ENCODE measurements at regions of chr16 and their contacts with region 1.

Region 1: DNA sequence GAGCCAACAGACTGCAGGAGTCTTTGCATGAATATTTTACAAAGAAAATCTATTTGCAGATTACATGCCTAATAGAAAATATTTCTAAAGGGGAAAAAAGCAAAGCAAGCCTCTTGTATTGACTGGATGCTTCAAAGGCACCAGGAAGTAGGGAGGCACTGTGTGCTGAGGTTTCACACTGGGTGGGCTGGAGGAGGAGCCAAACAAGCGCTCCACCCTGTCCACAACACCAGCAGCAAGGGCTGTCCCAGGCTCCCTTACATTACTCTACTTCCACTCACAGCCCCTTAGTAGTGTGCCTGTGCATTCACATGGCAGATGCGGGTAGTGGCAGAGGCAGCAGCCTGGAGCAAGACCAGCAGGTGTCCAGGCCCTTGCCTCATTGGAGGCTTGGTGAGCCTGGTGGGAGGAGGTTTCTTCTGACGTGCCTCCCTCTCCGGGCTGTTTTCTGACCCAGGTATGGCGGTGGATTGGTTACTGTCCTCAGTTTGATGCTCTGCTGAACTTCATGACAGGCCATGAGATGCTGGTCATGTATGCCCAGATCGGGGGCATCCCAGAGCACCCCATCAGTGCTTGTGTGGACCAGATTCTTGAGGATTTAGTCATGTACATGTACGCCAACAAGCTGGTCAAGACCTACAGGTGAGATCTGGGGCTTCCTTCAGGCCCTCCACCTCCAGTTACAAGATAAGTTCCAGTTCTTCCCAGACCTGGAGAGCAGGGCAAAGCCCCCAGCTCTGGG is 7.0 kb upstream of the CCNF start:
- DNase-seq: no peak
- H3K4me3 ChIP-seq: no peak overlapping the region
- H3K27ac ChIP-seq: no peak overlapping the region
- H3K4me1 ChIP-seq: peaks cover 0 to 11% of the 10 kb centered on the region in 2 experiments; a peak in 1 of 4 replicates
- H3K27me3 ChIP-seq: no peaks in the 10 kb centered on the region
- CTCF ChIP-seq: no peak
- EP300 ChIP-seq: no peak
- RAD21 ChIP-seq: no peak

Region 2: GRCh38 chr16:2340564-2341455 is 81.5 kb before region 1 on chr16 and contains the start of gene ABCA3:
- CTCF ChIA-PET with region 1: interaction called, 16 read pairs
- POLR2A ChIA-PET with region 1: interaction called, 7 read pairs
- DNase-seq: peak; percentile 100
- H3K4me3 ChIP-seq: peak within 1 kb of the TSS; percentile 76 to 82
- H3K27ac ChIP-seq: peak within 1 kb of the TSS in 1 of 2 experiments; percentile 80; a peak in 2 of 4 replicates
- H3K4me1 ChIP-seq: peaks cover 0 to 20% of the 10 kb centered on the region in 2 experiments; a peak in 2 of 4 replicates
- H3K27me3 ChIP-seq: no peaks in the 10 kb centered on the region
- CTCF ChIP-seq: peak; percentile 96
- EP300 ChIP-seq: no peak
- RAD21 ChIP-seq: peak; percentile 81
- polyA plus RNA-seq, gene ABCA3: 6.9 and 9.9 TPM in 2 replicates

Region 3: DNA sequence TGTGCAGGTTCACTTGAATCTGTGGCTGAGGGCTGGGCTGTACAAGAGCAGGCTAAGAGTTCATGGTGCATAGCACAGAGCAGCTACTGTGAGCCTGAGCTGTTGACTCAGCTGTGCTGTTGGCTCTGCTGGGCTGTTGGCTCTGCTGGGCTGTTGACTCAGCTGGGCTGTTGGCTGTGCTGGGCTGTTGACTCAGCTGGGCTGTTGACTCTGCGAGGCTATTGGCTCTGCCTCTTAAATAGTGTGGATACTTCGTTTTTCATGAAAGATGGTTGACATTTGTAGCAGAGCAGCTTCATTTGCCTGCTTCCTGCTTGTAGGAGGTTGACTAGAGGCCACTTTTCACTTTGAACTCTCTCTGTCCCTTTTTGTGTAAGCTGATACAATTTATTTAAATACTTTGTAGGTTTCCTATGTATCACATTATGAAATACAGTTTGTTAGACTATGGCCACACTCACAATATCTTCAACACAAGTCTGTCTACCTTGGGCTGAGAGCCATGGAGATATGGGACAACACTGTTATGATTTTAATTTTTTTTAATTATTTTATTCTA is 33.3 kb before region 1 on chr16:
- CTCF ChIA-PET with region 1: interaction called, 13 read pairs
- POLR2A ChIA-PET with region 1: no interaction called
- DNase-seq: no peak
- H3K4me3 ChIP-seq: no peak overlapping the region
- H3K27ac ChIP-seq: no peak overlapping the region
- H3K4me1 ChIP-seq: peaks cover 0 to 3% of the 10 kb centered on the region in 2 experiments; a peak in 2 of 4 replicates
- H3K27me3 ChIP-seq: peaks cover 2% of the 10 kb centered on the region; the same call in 1 of the 2 replicates
- CTCF ChIP-seq: no peak
- EP300 ChIP-seq: no peak
- RAD21 ChIP-seq: no peak

Region 4: DNA sequence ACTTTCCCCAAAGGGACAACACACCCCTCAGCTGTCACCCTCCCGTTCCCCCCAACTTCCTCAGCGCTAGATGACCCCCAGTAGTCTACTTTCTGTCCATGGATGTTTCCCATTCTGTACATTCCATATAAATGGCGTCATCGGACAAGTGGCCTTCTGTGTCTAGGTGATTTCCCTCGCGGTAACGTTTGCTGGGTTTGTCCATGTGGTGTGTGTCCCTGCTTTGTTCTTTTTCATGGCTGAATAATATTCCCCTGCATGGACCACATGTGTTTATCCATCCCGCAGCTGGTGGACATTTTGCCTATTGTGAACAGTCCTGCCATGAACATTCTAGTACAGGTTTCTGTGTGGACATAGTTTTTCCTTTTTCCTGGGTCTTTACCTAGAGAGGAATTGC is 30.4 kb after region 1 on chr16:
- CTCF ChIA-PET with region 1: no interaction called
- POLR2A ChIA-PET with region 1: no interaction called
- DNase-seq: no peak
- H3K4me3 ChIP-seq: no peak overlapping the region
- H3K27ac ChIP-seq: no peak overlapping the region
- H3K4me1 ChIP-seq: no peaks in the 10 kb centered on the region
- H3K27me3 ChIP-seq: no peaks in the 10 kb centered on the region
- CTCF ChIP-seq: no peak
- EP300 ChIP-seq: no peak
- RAD21 ChIP-seq: no peak

Measured in SK-N-SH (cell line).